Astrocyte of the cerebellum (primary cell): ENCODE measurements at regions of chr5 and their contacts with region 1.

Region 1: DNA sequence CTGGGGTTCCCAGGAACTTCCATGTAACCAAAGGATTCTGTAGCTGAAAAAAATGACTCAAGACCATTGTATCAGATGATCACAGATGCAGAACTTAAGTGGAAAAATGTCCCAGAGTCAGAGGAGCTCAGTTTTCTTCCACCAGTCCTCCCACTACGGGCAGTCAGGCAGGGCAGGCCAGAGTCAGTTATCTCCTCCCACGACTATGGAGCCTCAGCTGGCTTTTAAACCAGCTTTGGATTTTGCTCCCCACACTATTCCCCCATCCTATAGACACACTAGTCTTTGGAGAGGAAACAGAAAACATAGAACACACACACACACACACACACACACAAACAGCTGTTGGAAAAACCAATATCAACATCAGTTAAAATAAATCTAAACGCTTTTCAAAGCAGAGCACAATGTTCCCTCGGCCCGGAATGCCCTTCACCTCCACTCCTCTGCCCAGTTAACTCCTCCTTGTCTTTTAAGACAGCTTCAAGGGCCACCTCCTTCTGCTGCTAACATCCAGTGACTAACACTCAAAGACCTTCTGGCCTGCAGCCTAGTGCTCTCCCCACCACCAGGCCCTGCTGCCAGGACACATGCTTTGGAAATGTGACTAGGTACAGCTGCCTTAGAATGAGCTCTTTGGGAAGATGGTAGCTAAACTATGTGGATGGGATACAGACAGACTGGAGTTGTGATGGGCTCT is 56.8 kb downstream of the NIPAL4 start:
- DNase-seq: peak; percentile 80
- H3K4me3 ChIP-seq: no peak overlapping the region
- CTCF ChIP-seq: no peak

Region 2: DNA sequence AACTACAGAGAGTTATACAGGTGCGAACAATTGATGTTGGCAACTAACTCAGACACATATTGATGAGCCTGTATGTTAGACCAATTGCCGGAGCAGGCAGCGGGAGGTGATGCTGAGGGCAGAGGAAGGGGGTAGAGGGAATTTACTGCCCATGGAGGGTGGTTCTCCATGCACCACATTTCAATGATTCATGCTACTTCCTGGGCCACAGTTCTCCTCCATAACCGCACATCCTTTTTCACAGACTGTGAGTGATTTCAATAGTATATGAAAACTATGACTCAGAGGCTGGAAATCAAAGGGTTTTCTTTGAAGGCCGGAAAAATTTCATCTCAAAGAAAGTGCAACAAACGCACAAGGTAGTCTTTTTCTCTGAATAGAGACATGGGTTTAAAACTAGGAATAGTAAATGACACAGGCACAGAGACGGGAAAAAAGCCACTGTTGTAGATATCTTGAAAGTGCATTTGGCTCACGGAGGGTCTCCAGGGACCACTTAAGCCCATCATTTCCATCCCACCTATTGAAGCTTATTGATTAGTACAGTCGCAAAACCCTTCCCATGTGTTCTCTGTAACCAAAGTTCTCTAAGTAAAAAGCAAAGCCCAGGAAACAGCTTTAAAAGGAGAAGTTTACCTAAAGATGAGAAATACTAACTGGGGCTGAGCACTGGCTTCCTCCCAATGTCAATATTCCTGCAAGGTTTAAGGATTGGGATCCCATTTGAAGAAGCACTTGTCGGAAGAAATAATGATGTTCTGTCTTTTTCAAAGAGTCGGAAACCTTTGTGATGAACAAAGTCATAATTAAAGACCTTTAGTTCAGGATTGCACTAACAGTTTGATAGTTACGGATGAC is 86.8 kb after region 1 on chr5:
- in situ Hi-C with region 1: loop called (anchors 5 kb)
- DNase-seq: peak; percentile 83
- H3K4me3 ChIP-seq: no peak overlapping the region
- CTCF ChIP-seq: no peak

Region 3: GRCh38 chr5:158086856-158087255 is 570.1 kb after region 1 on chr5:
- in situ Hi-C with region 1: no loop called
- DNase-seq: no peak
- H3K4me3 ChIP-seq: no peak overlapping the region
- CTCF ChIP-seq: no peak